ENCODE measurements at regions of chr6 and their contacts with region 1.

Region 1: DNA sequence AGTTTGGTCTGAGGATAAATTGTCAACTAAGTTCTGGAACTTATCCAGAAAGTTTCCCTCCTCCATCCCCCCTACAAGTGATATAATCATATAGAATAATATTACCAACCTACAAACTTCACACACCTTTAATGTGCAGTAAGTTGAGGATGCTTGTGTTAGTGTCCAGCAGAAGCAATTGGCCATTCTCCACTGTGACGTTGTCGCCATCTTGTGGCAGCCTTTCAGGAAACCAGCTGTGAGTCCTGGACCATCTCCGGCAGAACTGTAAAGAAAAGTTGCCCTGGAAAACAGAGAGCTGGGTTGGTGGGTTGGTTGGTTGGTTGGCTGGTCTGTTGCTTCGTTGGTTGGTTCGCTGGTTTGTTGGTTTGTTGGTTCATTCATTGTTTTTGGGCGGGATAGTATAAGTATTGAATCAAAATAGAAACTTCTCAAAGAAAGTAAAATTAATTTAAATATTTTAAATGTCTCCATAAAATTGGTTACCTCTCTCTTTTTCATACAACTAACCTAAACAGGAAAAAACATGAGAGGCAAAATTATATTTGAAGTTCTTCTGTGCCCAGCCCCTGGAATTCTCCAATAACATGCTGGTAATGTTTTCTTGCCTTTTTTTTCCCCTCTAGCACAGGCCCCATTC is 127.5 kb downstream of the PKHD1 start:
- DNase-seq: peak; percentile 68 to 81
- H3K4me3 ChIP-seq: no peak overlapping the region
- H3K4me3 Mint-ChIP-seq: no peak overlapping the region
- H3K27ac Mint-ChIP-seq: no peak overlapping the region
- H3K4me1 ChIP-seq: no peaks in the 10 kb centered on the region
- H3K4me1 Mint-ChIP-seq: no peaks in the 10 kb centered on the region
- H3K27me3 ChIP-seq: no peaks in the 10 kb centered on the region
- H3K27me3 Mint-ChIP-seq: no peaks in the 10 kb centered on the region
- CTCF ChIP-seq: peak; percentile 77 to 86

Region 2: DNA sequence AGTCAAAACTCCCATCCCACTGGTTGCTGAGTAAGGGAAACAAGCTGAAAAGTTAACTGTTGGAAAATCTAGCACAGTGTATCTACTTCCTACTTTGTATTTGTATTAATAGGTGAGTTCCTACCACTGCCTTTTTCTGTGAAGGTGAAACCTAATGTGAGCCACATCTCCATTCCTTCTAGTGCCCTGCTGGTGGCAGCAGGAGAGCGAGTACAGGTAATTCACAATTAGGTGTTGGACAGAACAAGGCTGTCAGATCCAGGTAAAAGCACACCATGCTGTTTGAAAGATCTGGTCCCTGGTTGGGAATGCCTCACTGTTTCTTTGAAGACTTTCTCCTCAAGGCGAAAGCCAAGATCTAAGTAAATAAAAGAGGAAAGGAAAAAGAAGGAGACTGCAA is 400.8 kb before region 1 on chr6:
- CTCF ChIA-PET with region 1: no interaction called
- POLR2A ChIA-PET with region 1: no interaction called
- intact Hi-C with region 1: loop called (anchors 1 kb)
- DNase-seq: peak; percentile 29 to 37
- H3K4me3 ChIP-seq: no peak overlapping the region
- H3K4me3 Mint-ChIP-seq: no peak overlapping the region
- H3K27ac Mint-ChIP-seq: no peak overlapping the region
- H3K4me1 ChIP-seq: no peaks in the 10 kb centered on the region
- H3K4me1 Mint-ChIP-seq: no peaks in the 10 kb centered on the region
- H3K27me3 ChIP-seq: no peaks in the 10 kb centered on the region
- H3K27me3 Mint-ChIP-seq: peaks cover 12% of the 10 kb centered on the region
- CTCF ChIP-seq: peak; percentile 27 to 54

Region 3: DNA sequence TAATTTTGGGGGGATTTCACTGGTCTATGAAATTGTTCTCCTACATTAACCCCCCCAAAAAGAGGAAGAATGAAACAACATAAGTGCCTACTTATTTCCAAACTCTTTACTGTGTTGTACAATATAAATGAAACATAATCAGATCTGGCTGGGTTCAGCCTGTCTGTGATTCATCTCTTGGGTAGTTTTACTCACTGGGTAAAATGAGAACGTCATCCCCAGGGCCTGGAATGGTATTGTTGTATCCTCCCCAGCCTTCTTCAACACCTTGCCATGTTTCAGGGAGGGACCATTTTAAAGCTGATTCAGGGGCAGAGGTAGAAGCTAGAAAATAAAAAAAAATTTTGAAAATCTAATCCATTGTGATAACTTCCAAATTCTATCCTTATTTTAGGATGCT is 129.2 kb before region 1 on chr6:
- CTCF ChIA-PET with region 1: interaction called, 4 read pairs
- POLR2A ChIA-PET with region 1: no interaction called
- intact Hi-C with region 1: loop called (anchors 1 kb)
- DNase-seq: no peak
- H3K4me3 ChIP-seq: no peak overlapping the region
- H3K4me3 Mint-ChIP-seq: no peak overlapping the region
- H3K27ac Mint-ChIP-seq: no peak overlapping the region
- H3K4me1 ChIP-seq: no peaks in the 10 kb centered on the region
- H3K4me1 Mint-ChIP-seq: no peaks in the 10 kb centered on the region
- H3K27me3 ChIP-seq: no peaks in the 10 kb centered on the region
- H3K27me3 Mint-ChIP-seq: no peaks in the 10 kb centered on the region
- CTCF ChIP-seq: no peak

Region 4: DNA sequence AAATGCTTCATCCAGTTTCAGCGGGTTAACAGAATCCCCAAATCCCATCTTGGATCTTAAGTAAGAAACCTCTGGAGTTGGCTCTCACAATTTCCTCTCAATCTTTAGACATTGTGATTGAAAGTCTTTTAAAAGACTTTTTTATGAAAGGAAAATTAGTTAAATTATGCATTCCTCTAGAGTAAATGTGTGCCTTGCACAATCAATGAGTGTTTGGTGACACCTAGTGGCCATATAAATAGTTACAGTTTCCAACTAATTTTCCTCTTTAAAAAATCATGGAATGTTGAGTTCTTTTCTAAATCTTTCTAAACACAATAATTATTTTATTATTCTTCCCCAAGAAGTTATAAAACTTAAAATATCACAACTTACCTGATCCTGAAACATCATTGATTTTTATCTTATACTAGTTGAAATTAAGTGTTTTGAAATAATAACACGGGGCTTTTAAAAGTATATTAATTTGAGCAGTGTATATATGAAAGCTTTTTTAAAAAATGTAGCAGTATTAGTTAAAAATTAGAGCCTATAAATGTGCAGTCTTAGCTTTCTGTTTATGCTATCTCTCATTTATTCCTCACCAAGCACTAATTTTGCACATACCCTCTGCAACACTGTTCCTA is 61.2 kb after region 1 on chr6:
- CTCF ChIA-PET with region 1: interaction called, 6 read pairs
- POLR2A ChIA-PET with region 1: interaction called, 3 read pairs
- intact Hi-C with region 1: loop called (anchors 1 kb)
- DNase-seq: peak in 1 of 2 experiments; percentile 21
- H3K4me3 ChIP-seq: no peak overlapping the region
- H3K4me3 Mint-ChIP-seq: no peak overlapping the region
- H3K27ac Mint-ChIP-seq: no peak overlapping the region
- H3K4me1 ChIP-seq: peaks cover 15% of the 10 kb centered on the region
- H3K4me1 Mint-ChIP-seq: peaks cover 12% of the 10 kb centered on the region
- H3K27me3 ChIP-seq: no peaks in the 10 kb centered on the region
- H3K27me3 Mint-ChIP-seq: no peaks in the 10 kb centered on the region
- CTCF ChIP-seq: peak; percentile 55 to 78

Measured in Caco-2 (cell line).